ENCODE measurements at regions of chr2 and their contacts with region 1.

Region 1: DNA sequence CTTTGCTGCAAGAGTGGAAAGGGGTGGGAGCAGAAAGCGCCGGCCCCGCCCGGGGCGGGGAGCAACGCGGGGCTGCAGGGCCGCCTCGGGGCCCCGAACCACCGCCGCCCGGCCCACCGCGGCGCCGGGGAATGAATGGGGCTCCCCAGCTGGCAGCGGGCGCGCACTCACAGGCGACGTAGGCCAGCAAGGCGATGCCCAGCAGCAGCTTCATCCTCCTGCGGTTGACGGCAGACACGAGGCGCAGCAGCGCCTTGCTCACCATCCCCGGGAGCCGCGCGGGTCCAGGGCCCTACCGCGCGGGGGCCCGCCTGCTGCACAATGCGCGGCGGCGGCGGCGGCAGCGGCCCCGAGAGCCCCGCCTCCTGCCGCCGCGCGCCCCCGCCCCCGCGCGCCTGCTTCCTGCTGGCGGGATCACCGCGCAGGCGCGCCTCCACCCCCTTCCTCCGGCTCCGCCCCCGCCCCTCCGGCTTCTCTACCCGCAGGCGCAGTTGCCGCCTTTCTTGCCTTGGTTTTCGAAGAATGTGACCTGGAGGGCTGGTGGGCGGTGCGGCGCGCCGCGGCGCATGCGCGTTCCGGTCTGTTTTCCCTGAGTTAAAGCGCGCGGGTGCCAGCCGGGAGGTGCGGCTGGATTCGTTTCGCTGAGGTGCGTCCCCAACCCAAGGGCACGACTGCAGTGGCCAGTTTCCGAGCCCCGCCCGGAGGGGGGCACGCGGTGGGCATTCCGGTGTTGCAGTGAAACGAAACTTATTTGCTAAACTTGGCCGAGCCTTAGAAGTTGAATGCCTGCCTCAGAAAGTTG is at the start of gene UXS1:
- DNase-seq: peak; percentile 98
- H3K4me3 Mint-ChIP-seq: peak within 1 kb of the TSS; percentile 86
- H3K27ac Mint-ChIP-seq: peak within 1 kb of the TSS; percentile 83
- H3K4me1 Mint-ChIP-seq: peaks cover 44% of the 10 kb centered on the region
- H3K27me3 Mint-ChIP-seq: no peaks in the 10 kb centered on the region
- total RNA-seq, gene UXS1: 36.2 to 41.9 TPM

Region 2: DNA sequence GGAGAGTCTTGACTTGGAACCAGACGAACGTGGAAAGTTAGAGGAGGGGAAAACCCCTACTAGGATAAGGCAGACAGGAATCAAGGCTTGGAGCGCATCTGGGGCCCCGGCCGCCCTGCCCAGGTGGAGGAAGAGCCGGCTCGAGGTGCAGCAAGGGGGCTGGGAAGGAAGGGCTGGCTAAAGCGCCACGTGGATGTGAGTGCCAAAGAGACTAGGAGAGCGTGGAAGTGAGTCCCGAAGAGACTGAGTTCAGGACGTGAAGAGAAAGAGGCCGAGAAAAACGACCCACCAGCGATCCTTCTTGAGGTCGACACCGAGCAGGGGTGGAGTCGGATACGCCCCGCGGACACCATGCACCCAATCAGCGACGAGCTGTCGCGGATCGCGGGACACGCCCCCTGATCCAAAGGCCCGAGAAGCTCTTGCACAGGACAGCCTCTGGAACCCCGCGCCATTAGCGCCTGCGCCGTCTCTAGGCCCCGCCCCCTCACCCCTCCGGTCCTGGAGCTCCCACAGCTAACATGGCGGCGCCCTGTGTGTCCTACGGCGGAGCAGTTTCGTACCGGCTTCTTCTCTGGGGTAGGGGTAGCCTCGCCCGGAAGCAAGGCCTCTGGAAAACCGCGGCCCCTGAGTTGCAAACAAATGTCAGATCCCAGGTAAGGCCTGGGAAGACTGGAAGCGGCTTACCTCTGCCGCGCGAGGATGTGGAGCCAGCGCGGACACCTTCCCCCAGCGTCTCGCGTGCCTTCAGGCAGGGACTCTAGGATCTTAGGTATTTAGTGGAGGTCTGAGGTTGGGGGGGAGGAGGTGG is 1156.4 kb before region 1 on chr2 and contains the start of gene MRPS9:
- CTCF ChIA-PET with region 1: no interaction called
- intact Hi-C with region 1: loop called (anchors 10 kb)
- DNase-seq: peak; percentile 98
- H3K4me3 Mint-ChIP-seq: peak within 1 kb of the TSS; percentile 98
- H3K27ac Mint-ChIP-seq: peak within 1 kb of the TSS; percentile 88
- H3K4me1 Mint-ChIP-seq: peaks cover 30% of the 10 kb centered on the region
- H3K27me3 Mint-ChIP-seq: no peaks in the 10 kb centered on the region
- total RNA-seq, gene MRPS9: 42.1 to 45.3 TPM

Region 3: DNA sequence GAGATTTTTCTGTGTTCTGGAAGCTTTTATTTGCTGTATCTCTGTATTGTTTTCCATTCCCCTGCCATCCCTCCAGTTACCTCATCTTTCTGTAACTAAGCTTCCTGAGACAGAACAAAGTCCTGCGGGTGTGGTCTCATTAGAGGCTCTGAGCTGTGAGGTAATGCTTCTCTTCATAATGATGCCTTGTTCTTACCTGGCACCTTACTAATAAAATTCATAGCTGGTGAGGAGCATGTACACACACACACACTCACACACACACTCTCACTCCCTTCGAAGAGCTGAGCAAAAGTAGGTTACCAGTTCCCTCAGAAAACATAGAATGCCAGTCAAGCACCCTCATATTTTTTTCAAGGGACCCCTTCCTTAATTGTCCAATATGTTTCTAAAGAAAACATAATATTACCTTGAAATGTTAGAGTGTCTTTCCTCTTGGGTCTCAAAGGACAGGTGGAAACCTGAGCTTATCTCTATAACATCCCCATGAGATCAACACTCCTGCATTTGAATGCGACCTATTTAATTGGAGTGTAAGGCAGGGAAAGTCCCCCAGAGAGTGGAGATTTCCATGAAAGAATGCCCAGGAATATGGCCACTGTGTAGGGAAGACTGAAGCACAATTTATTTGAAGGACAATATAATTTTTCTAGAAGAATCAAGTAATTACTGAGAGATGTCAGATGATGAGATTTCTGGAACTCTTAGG is 611.1 kb before region 1 on chr2:
- CTCF ChIA-PET with region 1: no interaction called
- intact Hi-C with region 1: loop called (anchors 5 kb)
- DNase-seq: peak; percentile 12
- H3K4me3 Mint-ChIP-seq: no peak overlapping the region
- H3K27ac Mint-ChIP-seq: no peak overlapping the region
- H3K4me1 Mint-ChIP-seq: peaks cover 33% of the 10 kb centered on the region
- H3K27me3 Mint-ChIP-seq: no peaks in the 10 kb centered on the region

Region 4: DNA sequence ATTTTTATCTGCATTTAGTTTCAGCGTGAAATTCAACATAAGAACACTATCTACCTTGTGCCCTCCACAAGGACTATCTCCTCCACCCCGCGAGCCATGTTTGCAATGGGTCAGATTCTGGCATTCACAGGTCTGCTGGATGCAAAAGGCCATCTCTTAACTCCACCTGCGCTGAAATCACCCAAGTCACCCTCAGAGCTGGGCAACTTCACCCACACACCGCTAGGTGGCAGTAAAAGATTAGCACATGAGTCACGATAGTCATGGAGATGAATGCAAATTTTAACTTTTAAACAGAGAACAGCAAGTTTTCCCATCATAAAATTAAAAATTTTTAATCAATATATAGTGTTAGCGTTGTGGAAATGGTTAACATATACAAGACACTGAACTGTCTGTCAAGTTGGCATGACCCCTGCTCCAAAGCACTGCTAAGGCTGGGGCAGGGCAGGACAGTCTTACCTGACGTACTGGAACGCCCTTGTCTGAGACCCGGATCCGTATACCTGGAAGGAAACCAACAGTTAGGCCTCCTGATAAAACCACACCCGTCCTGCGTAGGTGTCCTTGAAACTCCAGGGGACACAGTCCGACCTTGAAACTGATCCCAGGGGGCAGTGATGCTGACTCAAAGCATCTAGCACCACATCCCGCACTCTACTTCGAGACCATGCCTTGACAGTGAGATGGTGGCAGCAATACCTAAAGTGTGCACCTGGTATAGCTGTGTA is 89.7 kb before region 1 on chr2:
- CTCF ChIA-PET with region 1: interaction called, 5 read pairs
- intact Hi-C with region 1: loop called (anchors 1 kb)
- DNase-seq: peak; percentile 80
- H3K4me3 Mint-ChIP-seq: no peak overlapping the region
- H3K27ac Mint-ChIP-seq: no peak overlapping the region
- H3K4me1 Mint-ChIP-seq: peaks cover 18% of the 10 kb centered on the region
- H3K27me3 Mint-ChIP-seq: no peaks in the 10 kb centered on the region

Region 5: GRCh38 chr2:106160786-106161261 is 33.4 kb before region 1 on chr2:
- CTCF ChIA-PET with region 1: interaction called, 7 read pairs
- intact Hi-C with region 1: loop called (anchors 1 kb)
- DNase-seq: peak; percentile 67
- H3K4me3 Mint-ChIP-seq: peak overlapping the region; percentile 79
- H3K27ac Mint-ChIP-seq: peak overlapping the region; percentile 95
- H3K4me1 Mint-ChIP-seq: peaks cover 87% of the 10 kb centered on the region
- H3K27me3 Mint-ChIP-seq: no peaks in the 10 kb centered on the region

Measured in activated naive CD4-positive, alpha-beta T cell treated with anti-CD3 and anti-CD28 coated beads for 36 hours (primary cell).